Heart left ventricle (tissue), 16 donors: ENCODE measurements at regions of chr1 and their contacts with region 1.

Region 1: GRCh38 chr1:153946622-153947241 is at the start of gene DENND4B:
- DNase-seq: peak; percentile 85 to 94 (median 87)
- ATAC-seq: peak; percentile 53 to 81 (median 77)
- H3K4me3 ChIP-seq: peak within 1 kb of the TSS; percentile 67 to 100 (median 92)
- H3K27ac ChIP-seq: peak within 1 kb of the TSS; percentile 97 to 100 (median 100)
- H3K4me1 ChIP-seq: peaks cover 0 to 43% (median 29%) of the 10 kb centered on the region in 12 donors
- H3K27me3 ChIP-seq: no peaks in the 10 kb centered on the region
- CTCF ChIP-seq: peak; percentile 82 to 99 (median 95)
- POLR2A ChIP-seq: no peak
- total RNA-seq, gene DENND4B: 30.5 to 60.7 (median 40.8) TPM

Region 2: DNA sequence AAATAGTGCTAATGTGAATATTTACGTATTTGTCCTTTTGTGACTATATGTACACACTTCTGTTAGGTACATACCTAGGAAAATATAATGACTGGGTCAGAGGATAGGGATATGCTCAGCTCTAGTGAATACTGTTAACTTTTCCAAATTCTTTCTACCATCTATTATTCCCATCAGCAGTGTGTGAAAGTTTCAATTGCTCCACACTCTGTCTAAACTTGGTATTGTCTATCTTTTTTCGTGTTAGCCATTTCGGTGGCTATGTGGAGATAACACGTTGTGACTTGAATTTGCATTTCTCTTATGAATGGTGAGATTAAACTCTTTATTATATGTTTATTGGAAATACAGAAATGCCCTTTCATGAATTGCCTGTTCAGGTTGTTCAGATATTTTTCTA is 766.2 kb before region 1 on chr1:
- intact Hi-C with region 1: no loop called
- DNase-seq: no peak
- ATAC-seq: no peak
- H3K4me3 ChIP-seq: no peak overlapping the region
- H3K27ac ChIP-seq: no peak overlapping the region
- H3K4me1 ChIP-seq: no peaks in the 10 kb centered on the region
- H3K27me3 ChIP-seq: no peaks in the 10 kb centered on the region
- CTCF ChIP-seq: no peak
- POLR2A ChIP-seq: no peak

Region 3: DNA sequence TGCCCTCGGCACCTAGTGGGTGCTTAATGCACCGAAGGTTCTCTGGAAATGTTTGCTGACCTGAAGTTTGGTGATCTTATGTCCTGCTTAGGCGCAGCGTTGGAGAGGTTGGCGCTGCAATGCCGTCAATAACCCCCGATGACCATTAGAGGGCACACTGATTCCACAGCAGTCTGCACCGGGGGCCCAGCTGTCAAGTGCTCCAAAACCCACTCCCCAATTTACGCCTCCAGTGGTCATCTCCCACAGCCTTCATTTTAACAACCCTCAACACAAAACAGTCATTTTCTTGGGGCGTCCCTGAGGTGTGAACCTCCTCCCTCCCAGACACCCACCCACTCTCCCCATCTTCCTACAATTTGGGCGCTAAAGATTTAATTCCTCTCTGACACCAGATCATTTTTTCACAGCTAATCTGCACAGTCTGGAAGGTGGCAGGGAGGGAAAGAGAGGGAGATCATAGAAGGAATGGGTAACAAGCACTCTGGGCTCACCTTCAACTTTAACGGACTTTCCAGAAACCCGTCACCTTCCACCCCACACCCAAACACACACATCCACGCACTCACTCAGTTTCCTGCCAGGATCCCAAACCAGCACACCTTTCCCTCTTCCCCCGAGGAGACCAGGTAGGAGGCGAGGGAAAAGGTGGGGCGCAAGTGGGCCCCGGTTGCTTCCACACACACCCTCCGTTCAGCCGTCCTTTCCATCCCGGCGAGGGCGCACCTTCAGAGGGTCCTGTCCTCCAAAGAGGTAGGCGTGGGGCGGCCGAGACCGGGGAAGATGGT is 268.8 kb before region 1 on chr1:
- intact Hi-C with region 1: loop called in 1 of 10 experiments (anchors 5 kb)
- DNase-seq: peak in 4 of 5 donors; percentile 50 to 71 (median 52)
- ATAC-seq: peak; percentile 44 to 78 (median 67)
- H3K4me3 ChIP-seq: peak overlapping the region; percentile 35 to 76 (median 60)
- H3K27ac ChIP-seq: peak overlapping the region in 11 of 12 donors; percentile 3 to 83 (median 68)
- H3K4me1 ChIP-seq: peaks cover 0 to 26% (median 19%) of the 10 kb centered on the region in 12 donors
- H3K27me3 ChIP-seq: peaks cover 0 to 28% (median 7%) of the 10 kb centered on the region in 9 donors
- CTCF ChIP-seq: peak; percentile 82 to 96 (median 93)
- POLR2A ChIP-seq: no peak

Region 4: GRCh38 chr1:153827168-153827964 is 119.4 kb before region 1 on chr1:
- intact Hi-C with region 1: loop called in 1 of 10 experiments (anchors 5 kb)
- DNase-seq: no peak
- ATAC-seq: no peak
- H3K4me3 ChIP-seq: no peak overlapping the region
- H3K27ac ChIP-seq: no peak overlapping the region
- H3K4me1 ChIP-seq: peaks cover 0 to 17% (median 6%) of the 10 kb centered on the region in 12 donors
- H3K27me3 ChIP-seq: no peaks in the 10 kb centered on the region
- CTCF ChIP-seq: no peak
- POLR2A ChIP-seq: no peak

Region 5: GRCh38 chr1:153932156-153933131 is 14.3 kb before region 1 on chr1:
- intact Hi-C with region 1: loop called in 2 of 10 experiments (anchors 1 to 2 kb)
- DNase-seq: no peak
- ATAC-seq: no peak
- H3K4me3 ChIP-seq: no peak overlapping the region
- H3K27ac ChIP-seq: no peak overlapping the region
- H3K4me1 ChIP-seq: peaks cover 0 to 12% (median 1%) of the 10 kb centered on the region in 12 donors
- H3K27me3 ChIP-seq: no peaks in the 10 kb centered on the region
- CTCF ChIP-seq: no peak
- POLR2A ChIP-seq: no peak

Region 6: DNA sequence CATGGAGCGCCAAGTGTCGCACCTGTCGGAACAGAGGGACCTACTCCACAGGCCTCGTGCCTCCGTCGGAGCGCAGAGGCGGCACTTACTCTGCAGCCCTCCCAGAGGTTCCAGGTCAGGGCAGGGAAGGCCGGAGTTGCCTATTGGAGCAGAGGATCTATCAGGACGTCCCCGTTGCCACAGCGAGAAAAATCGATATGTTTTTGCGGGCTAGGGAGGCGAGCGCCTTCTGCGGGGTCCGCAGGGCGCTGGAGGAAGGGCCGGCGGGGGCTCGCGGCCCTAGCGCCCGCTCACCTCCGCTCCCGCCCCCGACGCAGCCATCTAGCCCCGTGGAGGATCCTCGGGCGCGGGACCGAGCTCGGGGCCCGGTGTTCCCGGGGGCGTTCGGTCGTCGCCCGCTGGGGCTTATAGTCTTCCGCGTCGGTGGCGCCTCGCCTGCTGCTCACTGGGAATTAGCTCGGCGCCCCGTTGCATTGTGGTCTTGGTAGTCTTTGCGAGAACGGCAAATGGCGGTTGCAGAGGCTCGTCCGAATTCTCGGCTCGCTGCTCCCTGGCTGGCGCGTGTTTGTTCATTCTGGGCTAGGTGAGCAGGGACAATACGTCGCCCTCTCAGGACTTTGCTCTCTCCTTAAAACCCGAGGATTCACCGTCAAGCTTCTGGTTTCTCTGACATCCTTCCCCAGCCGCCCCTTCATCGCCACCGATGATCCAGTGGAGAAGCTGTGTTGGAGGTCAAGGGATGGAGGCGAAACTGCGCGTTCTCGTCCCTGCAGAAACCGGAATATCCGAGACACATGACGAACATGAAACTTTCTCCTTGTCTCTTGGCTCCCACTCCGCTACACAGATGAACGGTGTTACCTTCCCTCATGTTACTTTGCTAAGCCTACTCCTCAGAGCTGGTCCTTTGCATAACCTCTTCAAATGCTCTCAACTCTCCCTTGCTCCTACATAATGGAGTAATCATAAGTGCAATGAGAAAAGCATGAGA is 30.8 kb after region 1 on chr1 and contains the start of gene JTB:
- intact Hi-C with region 1: loop called in 1 of 10 experiments (anchors 1 kb)
- DNase-seq: peak; percentile 90 to 94 (median 92)
- ATAC-seq: peak; percentile 90 to 97 (median 96)
- H3K4me3 ChIP-seq: peak within 1 kb of the TSS; percentile 70 to 97 (median 88)
- H3K27ac ChIP-seq: peak within 1 kb of the TSS; percentile 72 to 97 (median 92)
- H3K4me1 ChIP-seq: peaks cover 0 to 40% (median 19%) of the 10 kb centered on the region in 12 donors
- H3K27me3 ChIP-seq: no peaks in the 10 kb centered on the region
- CTCF ChIP-seq: no peak
- POLR2A ChIP-seq: peak; percentile 66 to 91
- total RNA-seq, gene JTB: 55.0 to 175 (median 79.5) TPM